PC-9 (cell line): ENCODE measurements at regions of chr12 and their contacts with region 1.

Region 1: GRCh38 chr12:39103552-39104165 is 198.3 kb upstream of the CPNE8 start:
- DNase-seq: peak; percentile 18 to 52
- H3K4me3 ChIP-seq: no peak overlapping the region
- H3K27ac ChIP-seq: no peak overlapping the region
- H3K4me1 ChIP-seq: 0 out of 2 replicates have a peak, but pooled peaks cover 4% of the 10 kb centered on the region
- H3K27me3 ChIP-seq: no peaks in the 10 kb centered on the region
- CTCF ChIP-seq: peak; percentile 86

Region 2: DNA sequence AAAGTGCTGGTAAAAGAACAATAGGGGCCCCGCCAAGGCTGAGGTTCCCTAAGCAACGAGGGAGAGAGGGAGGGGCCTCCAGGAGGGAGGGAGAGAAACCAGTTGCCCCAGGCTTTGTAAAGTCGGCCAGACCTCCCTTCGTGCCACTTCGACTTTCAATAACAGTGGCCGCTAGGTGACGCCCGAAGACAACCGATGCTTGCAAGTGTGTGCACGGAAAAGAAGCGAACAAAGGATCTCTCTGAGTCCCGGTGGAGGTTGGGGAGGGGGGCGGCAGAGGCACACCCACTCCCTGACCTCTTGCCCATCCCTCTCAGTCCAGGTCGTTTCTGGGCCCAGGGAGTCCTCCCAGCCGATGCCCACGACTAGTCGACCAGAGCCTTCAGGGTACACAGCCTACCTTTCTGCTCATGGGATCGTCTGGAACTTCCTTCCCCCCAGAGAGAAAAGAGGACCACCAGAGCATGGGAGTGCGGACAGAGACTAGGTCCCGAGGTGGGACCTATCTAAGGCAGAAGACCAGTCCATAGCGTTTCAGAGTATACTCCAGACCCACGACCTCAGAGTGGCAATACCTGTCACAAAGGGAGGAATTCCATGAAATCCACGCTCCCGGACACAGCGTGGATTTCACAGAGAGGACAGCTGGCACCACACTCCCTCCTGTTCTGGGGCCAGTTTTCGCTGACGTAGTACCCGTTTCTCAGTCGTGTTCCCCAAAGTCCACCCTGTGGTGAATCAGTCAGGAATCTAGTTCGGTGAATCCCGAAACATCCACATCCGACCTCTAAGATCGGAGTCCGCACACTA is 1049.8 kb before region 1 on chr12:
- CTCF ChIA-PET with region 1: no interaction called
- POLR2A ChIA-PET with region 1: no interaction called
- intact Hi-C with region 1: loop called (anchors 10 kb)
- DNase-seq: peak; percentile 70 to 82
- H3K4me3 ChIP-seq: peak overlapping the region; percentile 41; the same call in 1 of the 2 replicates
- H3K27ac ChIP-seq: no peak overlapping the region
- H3K4me1 ChIP-seq: peaks cover 17% of the 10 kb centered on the region
- H3K27me3 ChIP-seq: no peaks in the 10 kb centered on the region
- CTCF ChIP-seq: peak; percentile 88

Region 3: GRCh38 chr12:38332814-38333213 is 770.8 kb before region 1 on chr12:
- CTCF ChIA-PET with region 1: no interaction called
- POLR2A ChIA-PET with region 1: no interaction called
- intact Hi-C with region 1: loop called (anchors 2 kb)
- DNase-seq: no peak
- H3K4me3 ChIP-seq: no peak overlapping the region
- H3K27ac ChIP-seq: no peak overlapping the region
- H3K4me1 ChIP-seq: no peaks in the 10 kb centered on the region
- H3K27me3 ChIP-seq: no peaks in the 10 kb centered on the region
- CTCF ChIP-seq: no peak

Region 4: GRCh38 chr12:38664661-38665269 is 438.9 kb before region 1 on chr12:
- CTCF ChIA-PET with region 1: no interaction called
- POLR2A ChIA-PET with region 1: no interaction called
- intact Hi-C with region 1: loop called (anchors 10 kb)
- DNase-seq: no peak
- H3K4me3 ChIP-seq: no peak overlapping the region
- H3K27ac ChIP-seq: no peak overlapping the region
- H3K4me1 ChIP-seq: no peaks in the 10 kb centered on the region
- H3K27me3 ChIP-seq: no peaks in the 10 kb centered on the region
- CTCF ChIP-seq: peak; percentile 66

Region 5: DNA sequence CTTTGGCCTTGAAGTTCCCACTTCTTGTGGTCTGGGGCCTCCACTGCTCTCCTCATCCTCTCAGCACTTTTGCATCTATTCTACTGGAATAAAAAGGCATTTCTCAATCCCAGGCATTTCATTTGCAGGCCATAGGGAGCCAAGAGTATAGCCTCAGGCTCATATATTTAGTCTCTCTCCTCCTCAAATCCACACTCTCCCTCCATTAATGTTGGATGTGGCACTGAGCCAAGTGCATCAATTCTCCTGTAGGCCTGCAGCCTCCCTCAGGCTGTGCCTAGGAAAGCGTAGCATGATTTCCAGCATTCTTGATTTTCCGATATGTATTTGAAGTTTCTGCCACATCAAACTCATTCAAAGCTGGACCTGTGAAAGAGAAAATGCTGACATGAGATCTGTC is 13.2 kb after region 1 on chr12:
- CTCF ChIA-PET with region 1: no interaction called
- POLR2A ChIA-PET with region 1: no interaction called
- intact Hi-C with region 1: no loop called
- DNase-seq: no peak
- H3K4me3 ChIP-seq: no peak overlapping the region
- H3K27ac ChIP-seq: no peak overlapping the region
- H3K4me1 ChIP-seq: no peaks in the 10 kb centered on the region
- H3K27me3 ChIP-seq: no peaks in the 10 kb centered on the region
- CTCF ChIP-seq: no peak

Region 6: GRCh38 chr12:39145175-39145999 is 41.7 kb after region 1 on chr12:
- CTCF ChIA-PET with region 1: no interaction called
- POLR2A ChIA-PET with region 1: no interaction called
- intact Hi-C with region 1: loop called (anchors 1 kb)
- DNase-seq: peak in 1 of 2 experiments; percentile 76
- H3K4me3 ChIP-seq: peak overlapping the region; percentile 70
- H3K27ac ChIP-seq: no peak overlapping the region
- H3K4me1 ChIP-seq: peaks cover 4% of the 10 kb centered on the region; the same call in 1 of the 2 replicates
- H3K27me3 ChIP-seq: no peaks in the 10 kb centered on the region
- CTCF ChIP-seq: peak; percentile 89